Activated CD8-positive, alpha-beta T cell treated with anti-CD3 and anti-CD28 coated beads for 36 hours (primary cell): ENCODE measurements at regions of chr22 and their contacts with region 1.

Region 1: DNA sequence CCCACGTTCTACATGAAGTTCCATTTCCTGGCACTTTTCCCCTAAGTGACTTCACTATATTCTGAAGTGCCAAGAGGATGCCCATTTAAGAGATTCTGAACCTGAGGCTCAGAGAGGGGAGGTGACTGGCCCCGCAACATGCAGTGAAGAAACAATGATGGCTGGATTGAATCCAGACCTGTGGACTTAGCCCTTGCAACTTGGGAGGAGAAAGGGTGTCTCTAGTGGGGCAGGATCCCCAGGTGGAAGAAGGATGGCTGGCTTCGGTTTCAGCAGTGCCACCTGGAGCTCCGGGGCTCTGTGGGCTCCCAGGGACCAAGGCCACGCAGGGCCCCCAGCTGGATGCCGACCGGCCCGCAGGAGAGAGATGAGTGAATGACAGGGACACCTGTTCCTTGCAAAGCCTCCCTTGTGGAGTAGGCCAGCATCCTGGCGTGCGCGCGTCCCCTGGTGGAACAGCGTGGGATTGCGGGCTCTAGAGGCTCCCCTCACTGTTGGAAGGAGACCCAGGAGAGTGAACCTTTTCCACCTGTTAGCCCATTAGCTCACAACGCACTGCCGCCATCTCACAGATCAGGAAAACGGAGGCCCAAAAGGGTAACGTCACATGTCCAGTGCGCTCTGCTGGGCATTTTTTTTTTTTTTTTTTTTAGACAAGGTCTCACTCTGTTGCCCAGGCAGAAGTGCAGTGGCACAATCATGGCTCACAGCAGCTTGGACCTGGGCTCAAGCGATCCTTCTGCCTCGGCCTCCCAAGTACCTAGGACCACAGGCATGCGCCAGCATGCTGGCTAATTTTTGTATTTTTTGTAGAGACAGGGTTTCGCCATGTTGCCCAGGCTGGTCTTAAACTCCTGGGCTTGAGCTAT is 104.7 kb downstream of the KIAA1671 start:
- DNase-seq: peak; percentile 88
- ATAC-seq: peak; percentile 62
- H3K4me3 Mint-ChIP-seq: no peak overlapping the region
- H3K27ac Mint-ChIP-seq: no peak overlapping the region
- H3K4me1 Mint-ChIP-seq: peaks cover 62% of the 10 kb centered on the region
- H3K27me3 Mint-ChIP-seq: no peaks in the 10 kb centered on the region
- CTCF ChIP-seq: peak; percentile 86

Region 2: GRCh38 chr22:24789516-24789915 is 267.7 kb before region 1 on chr22:
- CTCF ChIA-PET with region 1: no interaction called
- POLR2A ChIA-PET with region 1: no interaction called
- intact Hi-C with region 1: no loop called
- DNase-seq: no peak
- ATAC-seq: no peak
- H3K4me3 Mint-ChIP-seq: no peak overlapping the region
- H3K27ac Mint-ChIP-seq: no peak overlapping the region
- H3K4me1 Mint-ChIP-seq: no peaks in the 10 kb centered on the region
- H3K27me3 Mint-ChIP-seq: peaks cover 2% of the 10 kb centered on the region
- CTCF ChIP-seq: no peak

Region 3: DNA sequence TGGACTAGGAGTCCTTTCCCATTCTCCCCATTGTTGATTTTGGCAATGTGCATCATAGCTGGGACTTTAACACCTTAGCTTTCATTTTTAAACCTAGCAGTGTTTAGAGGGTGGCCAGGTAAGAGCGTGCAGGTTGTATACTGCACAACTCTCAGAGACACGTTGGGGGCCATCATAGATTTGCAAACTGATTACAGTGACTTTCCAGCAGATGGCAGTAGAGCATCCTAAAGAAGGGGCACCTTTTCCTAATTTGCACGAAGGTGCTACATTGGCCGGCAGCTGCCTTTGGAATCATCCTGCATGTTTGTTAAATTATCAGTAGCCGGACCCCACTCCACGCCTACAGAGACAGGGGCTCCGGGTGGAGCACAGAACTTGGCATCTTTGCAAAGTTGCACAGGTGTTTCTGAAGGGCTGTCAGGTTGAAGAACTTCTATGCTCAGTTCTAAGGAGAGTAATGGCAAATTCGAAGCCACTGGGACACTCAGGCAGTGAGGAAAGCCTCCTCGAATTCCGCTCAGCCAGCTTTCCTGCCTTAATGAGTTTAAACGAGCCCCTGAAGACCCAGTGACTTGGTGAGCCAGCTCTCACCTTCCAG is 118.4 kb before region 1 on chr22:
- CTCF ChIA-PET with region 1: interaction called, 110 read pairs
- POLR2A ChIA-PET with region 1: interaction called, 4 read pairs
- intact Hi-C with region 1: loop called (anchors 5 kb)
- DNase-seq: peak; percentile 26
- ATAC-seq: peak; percentile 68
- H3K4me3 Mint-ChIP-seq: no peak overlapping the region
- H3K27ac Mint-ChIP-seq: no peak overlapping the region
- H3K4me1 Mint-ChIP-seq: no peaks in the 10 kb centered on the region
- H3K27me3 Mint-ChIP-seq: peaks cover 3% of the 10 kb centered on the region
- CTCF ChIP-seq: peak; percentile 85

Region 4: GRCh38 chr22:24951942-24952836 is 105.1 kb before region 1 on chr22 and contains the start of gene KIAA1671:
- CTCF ChIA-PET with region 1: interaction called, 110 read pairs
- POLR2A ChIA-PET with region 1: no interaction called
- intact Hi-C with region 1: no loop called
- DNase-seq: peak; percentile 81
- ATAC-seq: peak; percentile 96
- H3K4me3 Mint-ChIP-seq: peak within 1 kb of the TSS; percentile 78
- H3K27ac Mint-ChIP-seq: peak within 1 kb of the TSS; percentile 28
- H3K4me1 Mint-ChIP-seq: peaks cover 17% of the 10 kb centered on the region
- H3K27me3 Mint-ChIP-seq: peaks cover 53% of the 10 kb centered on the region
- CTCF ChIP-seq: peak; percentile 99
- total RNA-seq, gene KIAA1671: 6.5 to 6.8 TPM

Region 5: GRCh38 chr22:25007444-25008106 is 49.7 kb before region 1 on chr22:
- CTCF ChIA-PET with region 1: no interaction called
- POLR2A ChIA-PET with region 1: no interaction called
- intact Hi-C with region 1: no loop called
- DNase-seq: no peak
- ATAC-seq: no peak
- H3K4me3 Mint-ChIP-seq: no peak overlapping the region
- H3K27ac Mint-ChIP-seq: no peak overlapping the region
- H3K4me1 Mint-ChIP-seq: peaks cover 1% of the 10 kb centered on the region
- H3K27me3 Mint-ChIP-seq: no peaks in the 10 kb centered on the region
- CTCF ChIP-seq: no peak

Region 6: GRCh38 chr22:25076336-25076735 is 19.1 kb after region 1 on chr22:
- CTCF ChIA-PET with region 1: interaction called, 37 read pairs
- POLR2A ChIA-PET with region 1: interaction called, 44 read pairs
- intact Hi-C with region 1: no loop called
- DNase-seq: peak; percentile 93
- ATAC-seq: peak; percentile 79
- H3K4me3 Mint-ChIP-seq: peak overlapping the region; percentile 43
- H3K27ac Mint-ChIP-seq: peak overlapping the region; percentile 83
- H3K4me1 Mint-ChIP-seq: peaks cover 82% of the 10 kb centered on the region
- H3K27me3 Mint-ChIP-seq: no peaks in the 10 kb centered on the region
- CTCF ChIP-seq: no peak

Region 7: GRCh38 chr22:25081409-25081824 is 24.2 kb after region 1 on chr22:
- CTCF ChIA-PET with region 1: interaction called, 37 read pairs
- POLR2A ChIA-PET with region 1: interaction called, 44 read pairs
- intact Hi-C with region 1: no loop called
- DNase-seq: peak; percentile 79
- ATAC-seq: peak; percentile 19
- H3K4me3 Mint-ChIP-seq: no peak overlapping the region
- H3K27ac Mint-ChIP-seq: no peak overlapping the region
- H3K4me1 Mint-ChIP-seq: peaks cover 85% of the 10 kb centered on the region
- H3K27me3 Mint-ChIP-seq: no peaks in the 10 kb centered on the region
- CTCF ChIP-seq: peak; percentile 72

Region 8: GRCh38 chr22:25159028-25159427 is 101.8 kb after region 1 on chr22:
- CTCF ChIA-PET with region 1: no interaction called
- POLR2A ChIA-PET with region 1: no interaction called
- intact Hi-C with region 1: no loop called
- DNase-seq: no peak
- ATAC-seq: no peak
- H3K4me3 Mint-ChIP-seq: no peak overlapping the region
- H3K27ac Mint-ChIP-seq: no peak overlapping the region
- H3K4me1 Mint-ChIP-seq: peaks cover 12% of the 10 kb centered on the region
- H3K27me3 Mint-ChIP-seq: no peaks in the 10 kb centered on the region
- CTCF ChIP-seq: no peak